CD4-positive, alpha-beta T cell (primary cell): ENCODE measurements at regions of chr22 and their contacts with region 1.

Region 1: DNA sequence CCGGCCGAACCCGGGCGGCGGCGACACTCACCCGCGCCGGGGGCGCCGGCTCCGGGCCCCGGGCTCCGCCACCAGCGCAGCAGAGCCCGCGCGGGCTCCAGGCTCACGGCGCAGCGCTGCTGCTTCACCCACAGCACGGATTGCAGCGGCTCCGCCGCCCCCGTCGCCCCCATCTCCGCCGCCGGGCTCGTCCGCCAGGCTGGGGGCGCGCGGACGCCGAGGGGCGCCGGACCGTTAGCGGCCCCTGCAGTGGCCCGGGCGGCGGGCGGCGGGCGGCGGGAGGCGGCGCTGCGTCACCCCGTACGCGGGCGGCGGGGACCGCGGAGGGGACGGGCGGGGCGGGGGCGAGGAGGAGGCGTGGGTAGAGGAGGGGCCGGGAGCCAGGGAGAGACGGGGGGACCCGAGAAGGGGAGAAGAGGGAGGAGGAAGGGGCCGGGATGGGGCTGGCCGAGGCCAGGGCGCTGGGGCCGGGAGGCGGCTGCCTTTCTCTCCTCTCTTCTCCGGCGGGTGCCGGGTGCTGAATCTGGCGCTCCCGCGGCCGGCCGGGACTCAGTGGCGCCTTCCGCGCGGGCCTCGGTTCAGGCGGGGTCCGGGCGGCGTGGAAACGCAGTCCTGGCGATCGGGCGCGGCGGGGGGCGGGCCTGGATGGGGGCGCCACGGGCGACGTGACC is at the start of gene CERK:
- DNase-seq: peak; percentile 55 to 87 (median 75)
- ATAC-seq: peak; percentile 50
- H3K4me3 ChIP-seq: peak within 1 kb of the TSS; percentile 83
- H3K4me3 Mint-ChIP-seq: peak within 1 kb of the TSS; percentile 100
- H3K27ac ChIP-seq: peak within 1 kb of the TSS; percentile 86 to 89
- H3K27ac Mint-ChIP-seq: peak within 1 kb of the TSS; percentile 99
- H3K4me1 ChIP-seq: peaks cover 56% of the 10 kb centered on the region
- H3K4me1 Mint-ChIP-seq: peaks cover 51% of the 10 kb centered on the region
- H3K27me3 ChIP-seq: no peaks in the 10 kb centered on the region
- H3K27me3 Mint-ChIP-seq: no peaks in the 10 kb centered on the region
- CTCF ChIP-seq: no peak
- total RNA-seq, gene CERK: 84.6 to 88.5 TPM

Region 2: GRCh38 chr22:46476547-46476941 is 261.6 kb before region 1 on chr22:
- CTCF ChIA-PET with region 1: no interaction called
- POLR2A ChIA-PET with region 1: no interaction called
- intact Hi-C with region 1: no loop called
- DNase-seq: peak in 2 of 14 experiments; percentile 50 to 56
- ATAC-seq: peak; percentile 55
- H3K4me3 ChIP-seq: no peak overlapping the region
- H3K4me3 Mint-ChIP-seq: peak overlapping the region; percentile 5
- H3K27ac ChIP-seq: no peak overlapping the region
- H3K27ac Mint-ChIP-seq: no peak overlapping the region
- H3K4me1 ChIP-seq: no peaks in the 10 kb centered on the region
- H3K4me1 Mint-ChIP-seq: peaks cover 16% of the 10 kb centered on the region
- H3K27me3 ChIP-seq: no peaks in the 10 kb centered on the region
- H3K27me3 Mint-ChIP-seq: peaks cover 4% of the 10 kb centered on the region
- CTCF ChIP-seq: no peak

Region 3: GRCh38 chr22:46563381-46564083 is 174.6 kb before region 1 on chr22:
- CTCF ChIA-PET with region 1: no interaction called
- POLR2A ChIA-PET with region 1: interaction called, 6 read pairs
- intact Hi-C with region 1: loop called (anchors 1 to 2 kb)
- DNase-seq: peak; percentile 66 to 88 (median 74)
- ATAC-seq: peak; percentile 96
- H3K4me3 ChIP-seq: peak overlapping the region; percentile 30
- H3K4me3 Mint-ChIP-seq: peak overlapping the region; percentile 38
- H3K27ac ChIP-seq: no peak overlapping the region
- H3K27ac Mint-ChIP-seq: no peak overlapping the region
- H3K4me1 ChIP-seq: peaks cover 13% of the 10 kb centered on the region
- H3K4me1 Mint-ChIP-seq: peaks cover 9% of the 10 kb centered on the region
- H3K27me3 ChIP-seq: no peaks in the 10 kb centered on the region
- H3K27me3 Mint-ChIP-seq: no peaks in the 10 kb centered on the region
- CTCF ChIP-seq: peak; percentile 76

Region 4: GRCh38 chr22:46613606-46614021 is 124.5 kb before region 1 on chr22:
- CTCF ChIA-PET with region 1: no interaction called
- POLR2A ChIA-PET with region 1: no interaction called
- intact Hi-C with region 1: loop called in 1 of 2 experiments (anchors 1 kb)
- DNase-seq: peak in 4 of 14 experiments; percentile 7 to 30 (median 14)
- ATAC-seq: no peak
- H3K4me3 ChIP-seq: peak overlapping the region; percentile 62
- H3K4me3 Mint-ChIP-seq: peak overlapping the region; percentile 93
- H3K27ac ChIP-seq: peak overlapping the region in 1 of 2 donors; percentile 14
- H3K27ac Mint-ChIP-seq: peak overlapping the region; percentile 96
- H3K4me1 ChIP-seq: peaks cover 33% of the 10 kb centered on the region
- H3K4me1 Mint-ChIP-seq: peaks cover 28% of the 10 kb centered on the region
- H3K27me3 ChIP-seq: no peaks in the 10 kb centered on the region
- H3K27me3 Mint-ChIP-seq: no peaks in the 10 kb centered on the region
- CTCF ChIP-seq: no peak

Region 5: DNA sequence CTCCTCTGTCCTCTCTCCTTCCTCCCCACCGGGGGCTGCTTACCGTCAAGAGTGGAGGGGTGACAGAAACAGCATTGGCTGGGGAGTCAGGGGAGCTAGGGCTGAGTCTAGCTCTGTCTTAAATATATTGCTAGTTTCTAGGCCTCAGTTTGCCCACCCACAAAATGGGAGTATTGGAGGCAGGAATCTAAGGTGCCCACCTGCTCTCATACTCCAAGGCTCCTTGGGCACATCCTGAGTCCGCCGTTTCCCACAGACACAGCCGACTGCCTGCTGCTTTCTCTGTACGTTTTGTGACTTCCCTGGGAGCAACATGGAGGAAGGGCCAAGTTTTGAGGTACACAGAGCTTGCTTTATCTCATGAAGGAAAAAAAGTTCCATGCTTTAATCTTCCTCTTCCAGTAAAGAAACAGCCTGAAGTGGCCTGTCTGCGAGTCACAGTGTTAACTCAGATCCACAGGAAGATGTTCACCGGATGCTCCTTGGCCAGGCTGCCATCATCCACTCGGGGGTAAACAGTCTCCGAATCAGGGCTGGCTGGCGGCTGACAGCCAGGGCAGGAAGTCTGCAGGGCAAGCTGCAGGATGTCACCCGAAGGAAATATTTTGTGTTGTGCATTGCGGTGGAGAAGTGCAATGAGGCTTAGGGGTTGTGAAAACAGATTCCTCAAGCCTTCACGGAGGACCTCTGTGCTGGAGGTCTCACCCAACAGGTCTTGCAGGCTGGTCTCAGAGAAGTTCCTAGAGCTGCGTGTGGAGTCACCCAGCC is 11.0 kb after region 1 on chr22:
- CTCF ChIA-PET with region 1: interaction called, 10 read pairs
- POLR2A ChIA-PET with region 1: interaction called, 33 read pairs
- intact Hi-C with region 1: loop called (anchors 1 kb)
- DNase-seq: peak; percentile 63 to 86 (median 80)
- ATAC-seq: peak; percentile 97
- H3K4me3 ChIP-seq: peak overlapping the region; percentile 51
- H3K4me3 Mint-ChIP-seq: peak overlapping the region; percentile 73
- H3K27ac ChIP-seq: peak overlapping the region; percentile 78 to 91
- H3K27ac Mint-ChIP-seq: peak overlapping the region; percentile 96
- H3K4me1 ChIP-seq: peaks cover 50% of the 10 kb centered on the region
- H3K4me1 Mint-ChIP-seq: peaks cover 34% of the 10 kb centered on the region
- H3K27me3 ChIP-seq: no peaks in the 10 kb centered on the region
- H3K27me3 Mint-ChIP-seq: no peaks in the 10 kb centered on the region
- CTCF ChIP-seq: no peak

Region 6: DNA sequence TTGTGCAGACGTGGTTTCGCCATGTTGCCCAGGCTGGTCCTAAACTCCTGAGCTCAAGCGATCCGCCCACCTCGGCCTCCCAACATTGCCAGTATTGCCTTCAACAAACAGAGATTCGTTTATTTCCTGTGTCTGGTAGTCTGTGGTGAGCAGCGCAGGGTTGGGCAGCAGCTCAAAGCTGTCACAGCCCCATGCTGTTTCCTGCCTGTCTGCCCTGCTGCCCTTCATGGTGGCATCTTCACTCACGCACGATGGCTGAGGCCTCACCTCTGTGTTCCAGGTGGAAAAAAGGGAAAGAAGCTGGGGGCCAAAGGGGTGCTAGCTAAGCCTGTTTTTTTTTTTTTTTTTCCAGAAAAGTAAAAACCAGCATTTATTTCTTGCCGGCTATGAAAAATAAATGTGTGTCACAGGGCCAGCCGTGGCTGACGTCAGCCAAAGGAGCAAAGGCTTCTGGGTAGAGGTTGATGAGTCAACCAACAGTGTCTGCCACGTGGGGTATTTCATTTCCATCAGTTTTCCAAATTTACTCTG is 53.2 kb after region 1 on chr22:
- CTCF ChIA-PET with region 1: interaction called, 12 read pairs
- POLR2A ChIA-PET with region 1: interaction called, 19 read pairs
- intact Hi-C with region 1: loop called (anchors 1 to 2 kb)
- DNase-seq: peak; percentile 67 to 95 (median 82)
- ATAC-seq: peak; percentile 90
- H3K4me3 ChIP-seq: peak overlapping the region; percentile 36
- H3K4me3 Mint-ChIP-seq: peak overlapping the region; percentile 79
- H3K27ac ChIP-seq: peak overlapping the region; percentile 91 to 97
- H3K27ac Mint-ChIP-seq: peak overlapping the region; percentile 100
- H3K4me1 ChIP-seq: peaks cover 55% of the 10 kb centered on the region
- H3K4me1 Mint-ChIP-seq: peaks cover 51% of the 10 kb centered on the region
- H3K27me3 ChIP-seq: no peaks in the 10 kb centered on the region
- H3K27me3 Mint-ChIP-seq: no peaks in the 10 kb centered on the region
- CTCF ChIP-seq: no peak

Region 7: DNA sequence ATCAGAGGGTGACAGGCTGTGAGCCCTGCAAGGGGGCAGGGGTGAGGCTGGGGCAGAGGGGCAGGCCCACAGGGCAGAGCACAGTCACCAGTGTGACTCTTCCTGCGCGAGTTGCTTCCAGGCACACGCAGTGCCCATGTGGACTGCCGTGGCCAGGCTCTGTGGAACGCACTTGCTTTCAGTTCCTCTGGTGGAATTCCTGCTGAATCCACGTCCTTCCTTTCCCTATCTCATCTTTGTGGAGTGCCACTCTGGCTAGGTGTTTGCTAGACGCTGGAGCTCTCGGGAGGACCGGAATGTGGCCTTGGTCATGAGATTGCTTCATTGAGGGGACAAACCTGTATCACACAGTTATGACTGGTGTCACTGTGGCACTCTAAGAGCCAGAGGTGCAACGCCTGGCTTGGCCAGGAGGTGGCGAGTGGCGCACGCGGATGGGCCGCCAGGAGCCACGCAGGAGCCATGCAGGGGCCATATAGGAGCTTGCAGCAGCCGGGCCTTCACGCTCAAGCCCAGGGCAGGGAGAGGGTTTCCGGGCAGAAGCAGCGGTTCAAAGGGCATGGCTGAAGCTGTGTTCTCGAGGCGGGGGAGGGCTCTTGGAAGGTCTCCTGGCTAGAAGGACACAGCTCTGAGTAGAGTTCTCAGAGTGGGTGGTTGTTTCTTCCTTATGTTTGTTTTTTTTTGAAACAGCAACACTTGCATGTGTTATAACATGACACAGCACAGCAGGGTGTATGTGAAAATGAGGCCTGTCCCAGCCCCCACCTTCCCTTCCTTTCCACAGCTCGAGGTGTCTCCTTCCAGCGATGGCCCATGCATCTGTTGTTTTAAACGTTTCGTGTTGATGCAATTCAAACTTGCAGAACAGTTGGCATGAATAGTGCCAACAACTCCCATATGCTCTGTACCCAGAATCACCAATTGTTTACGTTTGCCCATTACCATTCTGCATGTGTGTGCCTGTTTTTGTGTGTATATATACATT is 60.5 kb after region 1 on chr22:
- CTCF ChIA-PET with region 1: interaction called, 58 read pairs
- POLR2A ChIA-PET with region 1: interaction called, 32 read pairs
- intact Hi-C with region 1: loop called (anchors 1 kb)
- DNase-seq: peak; percentile 54 to 85 (median 78)
- ATAC-seq: peak; percentile 85
- H3K4me3 ChIP-seq: no peak overlapping the region
- H3K4me3 Mint-ChIP-seq: peak overlapping the region; percentile 8
- H3K27ac ChIP-seq: no peak overlapping the region
- H3K27ac Mint-ChIP-seq: peak overlapping the region; percentile 84
- H3K4me1 ChIP-seq: peaks cover 14% of the 10 kb centered on the region
- H3K4me1 Mint-ChIP-seq: peaks cover 47% of the 10 kb centered on the region
- H3K27me3 ChIP-seq: no peaks in the 10 kb centered on the region
- H3K27me3 Mint-ChIP-seq: no peaks in the 10 kb centered on the region
- CTCF ChIP-seq: peak; percentile 79

Region 8: DNA sequence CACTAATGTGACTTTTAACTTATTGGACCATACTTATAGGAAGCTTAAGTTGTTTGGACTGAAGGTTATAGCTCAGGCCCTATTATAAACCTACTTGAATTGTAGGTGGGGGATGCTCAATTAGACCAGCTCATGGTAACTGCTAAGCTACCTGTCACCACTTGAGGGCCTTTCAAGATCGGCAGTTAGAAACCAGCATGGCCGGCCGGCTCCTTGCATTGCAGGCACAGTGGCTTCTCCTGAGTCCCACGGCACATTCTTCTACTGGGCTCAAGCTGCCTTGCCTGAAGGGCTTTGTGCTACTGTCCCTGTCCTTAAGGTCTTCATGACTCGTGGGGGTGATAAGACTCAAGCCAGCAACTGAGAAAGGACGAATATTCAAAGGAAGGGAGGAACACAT is 95.1 kb after region 1 on chr22:
- CTCF ChIA-PET with region 1: no interaction called
- POLR2A ChIA-PET with region 1: no interaction called
- intact Hi-C with region 1: no loop called
- DNase-seq: no peak
- ATAC-seq: no peak
- H3K4me3 ChIP-seq: no peak overlapping the region
- H3K4me3 Mint-ChIP-seq: no peak overlapping the region
- H3K27ac ChIP-seq: no peak overlapping the region
- H3K27ac Mint-ChIP-seq: no peak overlapping the region
- H3K4me1 ChIP-seq: no peaks in the 10 kb centered on the region
- H3K4me1 Mint-ChIP-seq: peaks cover 16% of the 10 kb centered on the region
- H3K27me3 ChIP-seq: no peaks in the 10 kb centered on the region
- H3K27me3 Mint-ChIP-seq: no peaks in the 10 kb centered on the region
- CTCF ChIP-seq: no peak